ENCODE measurements at regions of chr12 and their contacts with region 1.

Region 1: GRCh38 chr12:100200463-100201181 is at the start of gene ACTR6:
- H3K4me3 ChIP-seq: peak within 1 kb of the TSS; percentile 78
- H3K27ac ChIP-seq: peak within 1 kb of the TSS; percentile 64
- H3K4me1 ChIP-seq: peaks cover 2% of the 10 kb centered on the region; the same call in 1 of the 2 replicates
- CTCF ChIP-seq: peak; percentile 47

Region 2: DNA sequence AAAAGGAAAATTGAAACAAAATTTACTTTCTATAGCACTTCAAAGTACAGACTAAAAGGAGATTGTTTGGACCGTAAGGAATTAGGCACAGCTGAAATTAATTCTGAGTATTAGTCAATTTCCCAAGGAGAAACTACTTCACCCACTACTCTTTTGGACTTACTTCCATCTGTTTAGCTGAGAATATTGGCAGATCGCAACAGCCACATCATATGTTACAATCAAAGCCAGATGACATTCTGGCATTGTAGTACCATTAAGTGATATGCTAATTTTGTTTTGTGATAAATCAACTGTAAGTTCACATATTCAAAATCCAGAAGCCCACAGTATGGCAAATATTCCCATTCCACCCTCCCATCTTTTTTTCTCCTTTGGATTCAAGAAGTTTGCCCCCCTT is 168.8 kb before region 1 on chr12:
- CTCF ChIA-PET with region 1: no interaction called
- POLR2A ChIA-PET with region 1: interaction called, 10 read pairs
- H3K4me3 ChIP-seq: no peak overlapping the region
- H3K27ac ChIP-seq: no peak overlapping the region
- H3K4me1 ChIP-seq: no peaks in the 10 kb centered on the region
- CTCF ChIP-seq: no peak

Region 3: GRCh38 chr12:100123316-100124095 is 77.1 kb before region 1 on chr12:
- CTCF ChIA-PET with region 1: no interaction called
- POLR2A ChIA-PET with region 1: no interaction called
- H3K4me3 ChIP-seq: no peak overlapping the region
- H3K27ac ChIP-seq: no peak overlapping the region
- H3K4me1 ChIP-seq: peaks cover 11% of the 10 kb centered on the region
- CTCF ChIP-seq: no peak

Region 4: GRCh38 chr12:100185361-100185894 is 15.2 kb before region 1 on chr12:
- CTCF ChIA-PET with region 1: no interaction called
- POLR2A ChIA-PET with region 1: no interaction called
- H3K4me3 ChIP-seq: no peak overlapping the region
- H3K27ac ChIP-seq: no peak overlapping the region
- H3K4me1 ChIP-seq: no peaks in the 10 kb centered on the region
- CTCF ChIP-seq: no peak

Region 5: DNA sequence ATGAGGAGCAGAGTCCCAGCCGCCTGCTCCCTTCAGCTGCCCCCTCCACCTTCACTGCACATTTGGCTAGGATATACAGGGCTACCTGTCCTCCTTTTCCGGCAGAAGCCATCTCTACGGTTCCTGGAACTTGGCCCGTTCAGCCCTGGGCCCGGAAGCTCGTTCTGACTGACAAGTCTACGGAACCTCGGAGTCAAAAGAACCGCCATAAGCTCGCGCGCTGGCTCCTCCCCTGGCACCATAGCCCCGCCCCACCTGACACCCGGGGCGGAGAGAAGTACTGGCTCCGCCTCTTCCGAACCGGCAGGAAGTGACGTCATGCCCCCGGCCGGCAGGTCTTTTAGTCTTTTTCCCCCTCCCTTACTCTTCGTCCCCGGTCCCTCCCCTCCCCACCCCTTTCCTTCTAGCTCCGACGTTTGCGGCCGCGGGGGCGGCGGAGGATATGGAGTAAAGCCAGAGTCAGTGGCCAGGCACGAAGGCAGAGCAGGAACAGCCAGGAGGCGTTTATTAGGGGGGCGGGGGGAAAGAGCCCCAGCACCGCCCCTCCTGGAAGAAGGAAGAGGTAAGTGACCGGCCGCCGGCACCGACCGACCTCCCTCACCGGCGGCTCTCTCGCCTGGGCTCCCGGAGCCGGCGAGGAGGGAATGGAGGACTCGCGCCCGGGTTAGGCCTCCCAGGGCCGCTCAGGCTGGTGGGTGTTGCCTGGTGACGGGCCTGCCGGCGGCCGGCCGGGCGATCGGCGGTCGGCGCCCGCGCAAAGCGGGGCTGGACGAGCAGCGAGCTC is 66.4 kb after region 1 on chr12 and contains the starts of genes DEPDC4 and SCYL2:
- CTCF ChIA-PET with region 1: no interaction called
- POLR2A ChIA-PET with region 1: interaction called, 11 read pairs
- H3K4me3 ChIP-seq: peak within 1 kb of the TSS; percentile 68
- H3K27ac ChIP-seq: peak within 1 kb of the TSS; percentile 93
- H3K4me1 ChIP-seq: peaks cover 6% of the 10 kb centered on the region; the same call in 1 of the 2 replicates
- CTCF ChIP-seq: peak; percentile 14; the same call in 1 of the 2 replicates

Measured in HEK293 (cell line).